Sigmoid colon (tissue), 7 donors: ENCODE measurements at regions of chr18 and their contacts with region 1.

Region 1: GRCh38 chr18:62425465-62426195 is 97.2 kb upstream of the ZCCHC2 start:
- DNase-seq: peak; percentile 94
- H3K4me3 ChIP-seq: peak overlapping the region; percentile 4 to 47 (median 38)
- H3K27ac ChIP-seq: peak overlapping the region; percentile 79 to 85 (median 83)
- H3K4me1 ChIP-seq: peaks cover 0 to 13% (median 12%) of the 10 kb centered on the region in 4 donors
- H3K27me3 ChIP-seq: no peaks in the 10 kb centered on the region
- CTCF ChIP-seq: peak; percentile 58 to 80 (median 77)
- EP300 ChIP-seq: no peak
- POLR2A ChIP-seq: no peak

Region 2: DNA sequence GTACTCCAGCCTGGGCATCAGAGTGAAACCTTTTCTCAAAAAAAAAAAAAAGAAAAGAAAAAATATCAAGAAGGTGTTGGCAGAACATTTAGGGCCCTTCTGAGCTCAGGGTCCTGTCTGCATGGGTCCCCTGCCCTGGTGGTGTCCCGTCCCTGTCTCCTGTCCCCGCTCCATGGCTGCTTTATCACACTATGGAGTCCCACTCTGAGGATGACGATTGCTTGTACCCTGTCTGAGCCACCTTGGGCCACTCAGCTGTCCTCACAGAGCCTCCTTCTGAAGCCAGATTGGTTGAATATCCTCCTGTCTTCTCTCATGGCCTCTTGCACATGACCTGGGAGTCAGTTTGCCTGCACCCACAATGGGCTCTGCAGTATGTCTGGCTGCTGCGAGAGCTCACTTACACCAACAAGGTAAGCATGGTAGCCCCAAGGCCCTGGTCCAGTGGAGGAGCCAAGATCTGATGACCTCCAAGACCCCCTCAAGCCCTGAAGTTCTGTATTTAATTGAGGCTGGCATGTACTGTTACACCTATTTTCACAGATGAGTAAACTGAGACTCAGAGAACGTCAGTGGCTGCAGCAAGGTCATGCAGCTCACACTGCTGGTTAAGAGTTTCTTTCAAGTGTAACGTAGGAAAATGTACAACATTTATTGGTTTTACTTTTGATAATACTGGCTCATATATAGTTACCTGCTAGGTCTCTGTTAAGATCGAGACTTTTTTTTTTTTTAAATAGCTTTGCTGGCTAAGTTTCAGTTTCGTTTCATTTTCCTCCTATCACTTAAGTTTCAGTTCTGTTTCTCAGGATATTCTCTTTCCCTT is 80.3 kb after region 1 on chr18:
- intact Hi-C with region 1: loop called (anchors 5 kb)
- DNase-seq: no peak
- H3K4me3 ChIP-seq: peak overlapping the region; percentile 25 to 49 (median 46)
- H3K27ac ChIP-seq: peak overlapping the region; percentile 19 to 64 (median 48)
- H3K4me1 ChIP-seq: peaks cover 0 to 10% (median 5%) of the 10 kb centered on the region in 4 donors
- H3K27me3 ChIP-seq: no peaks in the 10 kb centered on the region
- CTCF ChIP-seq: no peak
- EP300 ChIP-seq: no peak
- POLR2A ChIP-seq: no peak

Region 3: DNA sequence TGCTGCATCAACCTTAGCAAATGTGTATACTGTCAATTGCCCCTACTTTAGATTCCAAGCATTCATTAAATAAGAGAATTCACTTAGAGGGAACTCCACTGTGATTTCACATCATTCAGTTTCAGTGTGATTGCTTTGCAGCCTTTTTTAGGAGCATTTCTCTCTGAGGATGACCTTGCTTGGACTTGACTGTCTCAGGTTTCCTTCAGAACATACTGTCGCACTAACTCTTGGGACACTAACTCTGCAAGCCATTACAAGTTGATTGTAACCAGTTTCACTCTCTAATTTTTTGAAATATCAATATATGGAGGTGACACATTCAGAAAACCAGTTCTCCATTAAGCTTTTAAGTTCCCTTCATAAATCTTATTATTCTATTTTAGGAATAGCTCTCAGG is 90.6 kb after region 1 on chr18:
- intact Hi-C with region 1: no loop called
- DNase-seq: no peak
- H3K4me3 ChIP-seq: no peak overlapping the region
- H3K27ac ChIP-seq: no peak overlapping the region
- H3K4me1 ChIP-seq: no peaks in the 10 kb centered on the region
- H3K27me3 ChIP-seq: no peaks in the 10 kb centered on the region
- CTCF ChIP-seq: no peak
- EP300 ChIP-seq: no peak
- POLR2A ChIP-seq: no peak

Region 4: GRCh38 chr18:62982600-62983251 is 557.1 kb after region 1 on chr18:
- intact Hi-C with region 1: loop called (anchors 2 kb)
- DNase-seq: peak; percentile 79
- H3K4me3 ChIP-seq: peak overlapping the region in 3 of 4 donors; percentile 21 to 43 (median 42)
- H3K27ac ChIP-seq: no peak overlapping the region
- H3K4me1 ChIP-seq: peaks cover 0 to 8% (median 6%) of the 10 kb centered on the region in 4 donors
- H3K27me3 ChIP-seq: no peaks in the 10 kb centered on the region
- CTCF ChIP-seq: peak; percentile 67 to 75 (median 70)
- EP300 ChIP-seq: no peak
- POLR2A ChIP-seq: no peak